ENCODE measurements at regions of chr1 and their contacts with region 1.

Region 1: DNA sequence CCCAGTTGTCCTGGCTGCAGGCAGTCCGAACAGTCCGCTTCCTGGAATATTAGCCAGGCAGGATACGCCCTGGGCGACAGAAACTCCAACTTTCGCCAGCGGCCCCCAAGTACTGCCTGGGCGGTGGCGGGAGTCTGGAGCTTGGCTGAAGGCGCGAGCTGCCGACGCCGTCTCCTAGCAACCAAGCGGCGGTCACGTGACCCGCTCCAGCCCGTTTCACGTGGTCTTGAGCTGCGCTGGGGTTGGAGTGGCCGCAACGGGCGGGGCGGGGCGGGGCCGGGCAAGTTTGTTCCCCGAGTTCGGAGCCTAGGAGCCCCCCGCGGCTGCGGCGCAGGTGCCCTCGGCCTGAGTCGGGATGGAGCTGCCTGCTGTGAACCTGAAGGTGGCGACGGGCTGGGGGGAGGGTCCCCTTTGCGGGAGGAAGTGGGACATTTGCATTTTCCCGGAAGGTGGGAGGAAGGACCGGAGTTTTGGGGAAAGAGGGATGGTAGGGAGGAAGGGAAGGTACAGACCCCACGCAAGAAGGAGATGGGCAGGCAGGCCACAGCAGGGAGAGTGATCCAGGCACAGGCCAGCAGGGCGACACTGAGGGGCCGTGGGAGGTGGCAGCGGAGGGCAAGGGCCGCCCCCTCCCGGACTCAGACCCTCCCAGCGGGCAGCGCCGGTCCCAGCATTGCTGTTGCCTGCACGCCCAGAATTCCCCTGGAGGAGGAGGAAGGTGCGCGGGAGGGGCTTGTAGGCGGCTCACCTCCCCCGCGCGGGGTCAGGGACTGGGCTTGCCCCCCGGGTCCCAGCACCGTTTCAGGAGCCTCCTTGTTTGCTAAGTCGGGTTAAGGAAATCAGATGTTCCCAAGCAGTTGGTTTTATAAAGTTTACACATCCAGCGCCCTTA is at the start of gene AGTRAP:
- DNase-seq: peak; percentile 81 to 97
- H3K4me3 ChIP-seq: peak within 1 kb of the TSS; percentile 72 to 83
- H3K27ac ChIP-seq: peak within 1 kb of the TSS; percentile 73 to 90
- H3K4me1 ChIP-seq: peaks cover 3 to 18% of the 10 kb centered on the region in 2 donors
- H3K27me3 ChIP-seq: no peaks in the 10 kb centered on the region
- CTCF ChIP-seq: no peak
- total RNA-seq, gene AGTRAP: 95.6 TPM

Region 2: GRCh38 chr1:11272832-11273594 is 463.1 kb before region 1 on chr1 and contains the start of gene UBIAD1:
- intact Hi-C with region 1: loop called (anchors 5 kb)
- DNase-seq: peak; percentile 39 to 86
- H3K4me3 ChIP-seq: peak within 1 kb of the TSS; percentile 91 to 96
- H3K27ac ChIP-seq: peak within 1 kb of the TSS; percentile 79 to 93
- H3K4me1 ChIP-seq: peaks cover 0 to 29% of the 10 kb centered on the region in 2 donors
- H3K27me3 ChIP-seq: no peaks in the 10 kb centered on the region
- CTCF ChIP-seq: peak in 1 of 3 experiments; percentile 25
- total RNA-seq, gene UBIAD1: 53.0 TPM

Region 3: DNA sequence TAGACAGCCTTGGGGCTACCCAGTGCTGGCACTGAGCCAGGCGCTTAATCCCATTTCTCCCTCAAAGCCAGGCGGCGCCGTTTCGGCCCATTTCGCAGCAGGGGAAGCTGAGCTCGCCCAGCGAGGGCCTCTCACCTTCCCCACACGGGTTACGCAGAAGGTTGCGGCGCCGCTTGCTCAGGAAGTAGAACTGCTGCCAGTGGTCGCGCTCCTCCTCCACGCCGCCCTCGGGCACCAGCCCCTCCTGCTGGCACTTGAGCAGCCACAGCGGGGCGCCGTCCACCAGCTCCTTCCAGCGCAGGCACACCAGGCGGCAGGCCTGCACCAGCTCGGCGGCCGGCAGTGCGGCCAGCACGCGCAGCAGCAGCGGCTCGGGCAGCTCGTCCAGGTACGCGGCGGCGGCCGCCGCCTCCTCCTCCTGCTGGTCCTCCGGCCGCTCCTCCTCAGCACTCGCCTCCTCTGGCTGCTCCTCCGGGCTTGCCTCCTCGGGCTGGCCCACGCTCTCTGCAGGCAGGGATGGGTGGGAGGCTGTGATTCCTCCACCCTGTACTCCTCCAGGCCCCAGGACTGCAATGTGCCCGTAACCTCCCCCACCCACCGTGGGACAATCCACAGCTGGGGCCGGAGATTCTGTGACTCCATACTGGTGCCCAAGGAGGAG is 85.6 kb before region 1 on chr1:
- intact Hi-C with region 1: loop called (anchors 1 kb)
- DNase-seq: peak; percentile 43 to 88
- H3K4me3 ChIP-seq: peak overlapping the region in 1 of 2 donors; percentile 47
- H3K27ac ChIP-seq: no peak overlapping the region
- H3K4me1 ChIP-seq: peaks cover 11 to 12% of the 10 kb centered on the region in 2 donors
- H3K27me3 ChIP-seq: no peaks in the 10 kb centered on the region
- CTCF ChIP-seq: peak; percentile 67 to 84 (median 78)

Region 4: GRCh38 chr1:11790880-11791715 is 55.0 kb after region 1 on chr1:
- intact Hi-C with region 1: loop called (anchors 2 kb)
- DNase-seq: peak; percentile 89 to 98
- H3K4me3 ChIP-seq: peak overlapping the region in 1 of 2 donors; percentile 23
- H3K27ac ChIP-seq: peak overlapping the region; percentile 88 to 91
- H3K4me1 ChIP-seq: peaks cover 26 to 51% of the 10 kb centered on the region in 2 donors
- H3K27me3 ChIP-seq: no peaks in the 10 kb centered on the region
- CTCF ChIP-seq: no peak